Panc1 (cell line): ENCODE measurements at regions of chr2 and their contacts with region 1.

Region 1: DNA sequence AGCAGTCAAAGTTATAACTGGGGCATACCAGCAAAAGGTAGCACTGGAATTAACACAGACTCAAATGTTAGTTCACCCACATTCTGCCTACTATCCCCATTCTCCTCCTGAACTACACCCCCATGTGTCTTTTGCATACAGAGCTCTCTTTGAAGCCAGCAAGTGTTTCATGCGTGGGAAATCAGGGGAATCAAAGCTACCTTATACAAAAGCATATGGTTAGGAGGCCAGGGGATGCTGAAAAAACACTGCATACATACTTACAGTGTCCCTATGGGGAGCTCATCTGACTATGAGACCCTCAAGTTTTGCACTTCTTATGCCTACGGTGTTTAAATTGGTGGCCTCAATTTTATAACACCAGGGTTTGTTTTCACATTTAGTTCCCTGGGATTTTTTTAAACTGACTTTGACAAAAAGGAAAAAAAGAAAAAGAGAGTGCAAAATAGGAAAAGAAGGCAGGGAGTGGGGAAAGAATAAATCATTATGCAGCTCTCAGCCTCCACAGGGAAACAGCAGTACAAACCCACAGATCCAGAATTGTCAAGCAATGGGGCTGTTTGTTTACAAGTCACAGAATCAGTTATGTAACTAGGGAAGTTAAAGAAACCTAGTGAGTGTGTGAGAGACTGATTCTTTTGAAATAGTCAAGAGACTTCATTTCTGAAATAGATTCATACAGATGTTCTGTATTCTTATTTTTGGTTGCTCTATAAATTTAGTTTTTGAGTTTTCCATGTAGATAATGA is 20.1 kb upstream of the PPP3R1 start:
- DNase-seq: no peak
- ATAC-seq: no peak
- H3K4me3 ChIP-seq: no peak overlapping the region
- H3K27ac ChIP-seq: no peak overlapping the region
- H3K4me1 ChIP-seq: no peaks in the 10 kb centered on the region
- H3K27me3 ChIP-seq: peaks cover 6% of the 10 kb centered on the region; the same call in 1 of the 2 replicates
- CTCF ChIP-seq: no peak

Region 2: GRCh38 chr2:68000170-68000825 is 272.1 kb before region 1 on chr2:
- CTCF ChIA-PET with region 1: no interaction called
- POLR2A ChIA-PET with region 1: interaction called, 16 read pairs
- in situ Hi-C with region 1: no loop called
- intact Hi-C with region 1: no loop called
- DNase-seq: no peak
- ATAC-seq: no peak
- H3K4me3 ChIP-seq: no peak overlapping the region
- H3K27ac ChIP-seq: no peak overlapping the region
- H3K4me1 ChIP-seq: no peaks in the 10 kb centered on the region
- H3K27me3 ChIP-seq: no peaks in the 10 kb centered on the region
- CTCF ChIP-seq: no peak

Region 3: DNA sequence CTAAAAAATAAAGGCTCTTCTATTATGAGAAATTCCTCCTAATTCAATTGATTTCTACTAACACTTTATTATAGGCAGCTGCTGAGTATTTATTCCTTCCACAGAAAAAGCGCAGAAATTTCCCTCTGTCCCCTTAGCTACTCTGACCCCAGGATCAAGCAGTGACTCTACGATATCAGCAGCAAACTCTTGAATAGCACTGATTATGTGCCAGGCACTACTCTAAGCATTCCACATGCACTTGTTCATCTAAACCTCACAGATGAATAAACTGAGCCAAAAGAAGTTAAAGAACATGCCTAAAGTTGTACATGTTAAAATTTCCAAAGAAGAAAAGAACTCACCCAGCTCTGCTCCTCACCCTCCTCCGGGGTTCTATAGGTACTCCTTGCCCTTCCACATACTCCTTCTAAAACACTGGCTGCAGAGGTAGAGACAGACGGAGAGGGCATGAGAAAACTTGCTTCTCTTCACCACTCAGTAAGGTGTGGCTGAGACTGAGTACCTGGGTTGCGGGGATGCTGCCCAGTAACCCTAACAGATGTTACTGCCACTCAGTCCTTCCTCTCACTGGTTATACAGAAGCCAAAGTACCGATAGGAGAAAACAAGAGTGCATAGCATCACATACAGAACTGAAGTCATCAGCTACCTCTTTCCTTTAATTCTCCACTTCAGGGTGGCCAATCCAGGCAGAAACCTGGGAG is 219.6 kb before region 1 on chr2:
- CTCF ChIA-PET with region 1: no interaction called
- POLR2A ChIA-PET with region 1: no interaction called
- in situ Hi-C with region 1: no loop called
- intact Hi-C with region 1: no loop called
- DNase-seq: no peak
- ATAC-seq: no peak
- H3K4me3 ChIP-seq: no peak overlapping the region
- H3K27ac ChIP-seq: no peak overlapping the region
- H3K4me1 ChIP-seq: no peaks in the 10 kb centered on the region
- H3K27me3 ChIP-seq: no peaks in the 10 kb centered on the region
- CTCF ChIP-seq: no peak